ENCODE measurements at regions of chr10 and their contacts with region 1.

Region 1: GRCh38 chr10:48444266-48444665 is 137.8 kb downstream of the MAPK8 start:
- DNase-seq: no peak
- H3K4me3 ChIP-seq: no peak overlapping the region
- H3K27ac ChIP-seq: no peak overlapping the region
- H3K4me1 ChIP-seq: no peaks in the 10 kb centered on the region
- H3K27me3 ChIP-seq: no peaks in the 10 kb centered on the region
- CTCF ChIP-seq: peak; percentile 52; the same call in 1 of the 2 replicates

Region 2: GRCh38 chr10:48523820-48524758 is 79.8 kb after region 1 on chr10:
- CTCF ChIA-PET with region 1: no interaction called
- POLR2A ChIA-PET with region 1: no interaction called
- intact Hi-C with region 1: loop called (anchors 5 kb)
- DNase-seq: peak in 1 of 2 experiments; percentile 38
- H3K4me3 ChIP-seq: peak overlapping the region; percentile 60
- H3K27ac ChIP-seq: no peak overlapping the region
- H3K4me1 ChIP-seq: 0 out of 2 replicates have a peak, but pooled peaks cover 3% of the 10 kb centered on the region
- H3K27me3 ChIP-seq: peaks cover 33% of the 10 kb centered on the region; the same call in 1 of the 2 replicates
- CTCF ChIP-seq: peak; percentile 60

Measured in PC-9 (cell line).